SK-N-SH (cell line): ENCODE measurements at regions of chr2 and their contacts with region 1.

Region 1: DNA sequence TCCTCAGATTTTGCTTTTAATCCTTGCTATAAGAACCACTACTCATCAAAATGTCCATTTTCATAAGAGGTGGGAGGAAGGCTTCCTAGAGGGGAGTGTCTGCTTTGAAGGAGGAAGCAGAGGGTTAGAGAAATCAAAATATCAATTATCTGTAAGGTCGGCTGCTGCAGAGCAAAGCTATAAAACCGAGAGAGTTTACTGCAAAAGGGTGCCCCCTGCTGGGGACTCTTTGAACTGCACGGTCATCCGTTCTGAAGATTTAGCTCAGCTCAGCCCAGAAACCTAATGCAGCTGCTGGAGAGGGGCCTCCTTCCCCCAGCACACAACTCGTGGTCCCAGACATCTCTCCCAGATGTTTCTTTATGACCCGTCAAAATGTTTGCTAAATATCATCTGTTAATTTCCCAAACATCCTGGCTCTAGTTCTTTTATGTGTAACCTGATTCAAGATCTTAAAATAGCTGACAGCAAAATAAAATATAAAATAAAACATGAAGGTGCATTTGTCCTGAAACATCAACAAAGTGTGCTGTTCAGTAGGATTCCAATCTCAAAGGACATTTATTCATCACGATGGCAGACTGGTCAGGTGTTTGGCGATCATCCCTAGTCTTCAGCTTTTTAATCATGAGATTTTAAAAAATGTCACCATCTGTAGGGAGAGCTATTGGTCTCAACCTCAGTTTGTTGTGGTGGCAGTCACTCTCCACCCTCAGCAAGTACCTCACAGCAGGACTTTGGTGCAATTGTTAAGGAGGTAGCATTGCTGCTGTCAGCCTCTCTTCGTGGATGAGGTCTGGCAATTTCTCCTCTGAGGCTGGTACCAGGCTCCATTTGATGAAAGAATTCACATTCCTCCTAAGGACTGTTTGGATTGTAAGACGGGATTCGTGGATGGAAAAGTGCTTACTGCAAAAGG is 185.9 kb downstream of the MTX2 start:
- DNase-seq: peak; percentile 64
- H3K4me3 ChIP-seq: no peak overlapping the region; a peak in 1 of 4 replicates
- H3K27ac ChIP-seq: peak overlapping the region in 1 of 2 experiments; percentile 78; a peak in 2 of 4 replicates
- H3K4me1 ChIP-seq: peaks cover 0 to 16% of the 10 kb centered on the region in 2 experiments; a peak in 2 of 4 replicates
- H3K27me3 ChIP-seq: no peaks in the 10 kb centered on the region
- CTCF ChIP-seq: peak; percentile 94
- EP300 ChIP-seq: no peak
- RAD21 ChIP-seq: peak; percentile 88

Region 2: GRCh38 chr2:176118601-176119339 is 336.4 kb before region 1 on chr2:
- CTCF ChIA-PET with region 1: interaction called, 17 read pairs
- POLR2A ChIA-PET with region 1: interaction called, 3 read pairs
- DNase-seq: peak; percentile 66
- H3K4me3 ChIP-seq: no peak overlapping the region
- H3K27ac ChIP-seq: no peak overlapping the region
- H3K4me1 ChIP-seq: peaks cover 0 to 17% of the 10 kb centered on the region in 2 experiments; a peak in 1 of 4 replicates
- H3K27me3 ChIP-seq: peaks cover 40% of the 10 kb centered on the region
- CTCF ChIP-seq: peak; percentile 66
- EP300 ChIP-seq: no peak
- RAD21 ChIP-seq: peak; percentile 41

Region 3: GRCh38 chr2:176157499-176158185 is 297.5 kb before region 1 on chr2:
- CTCF ChIA-PET with region 1: interaction called, 14 read pairs
- POLR2A ChIA-PET with region 1: interaction called, 5 read pairs
- DNase-seq: peak; percentile 88
- H3K4me3 ChIP-seq: peak overlapping the region; percentile 54 to 71
- H3K27ac ChIP-seq: peak overlapping the region in 1 of 2 experiments; percentile 89; a peak in 2 of 4 replicates
- H3K4me1 ChIP-seq: peaks cover 0 to 8% of the 10 kb centered on the region in 2 experiments; a peak in 2 of 4 replicates
- H3K27me3 ChIP-seq: no peaks in the 10 kb centered on the region
- CTCF ChIP-seq: no peak
- EP300 ChIP-seq: no peak
- RAD21 ChIP-seq: no peak; the same call in 1 of the 2 replicates

Region 4: DNA sequence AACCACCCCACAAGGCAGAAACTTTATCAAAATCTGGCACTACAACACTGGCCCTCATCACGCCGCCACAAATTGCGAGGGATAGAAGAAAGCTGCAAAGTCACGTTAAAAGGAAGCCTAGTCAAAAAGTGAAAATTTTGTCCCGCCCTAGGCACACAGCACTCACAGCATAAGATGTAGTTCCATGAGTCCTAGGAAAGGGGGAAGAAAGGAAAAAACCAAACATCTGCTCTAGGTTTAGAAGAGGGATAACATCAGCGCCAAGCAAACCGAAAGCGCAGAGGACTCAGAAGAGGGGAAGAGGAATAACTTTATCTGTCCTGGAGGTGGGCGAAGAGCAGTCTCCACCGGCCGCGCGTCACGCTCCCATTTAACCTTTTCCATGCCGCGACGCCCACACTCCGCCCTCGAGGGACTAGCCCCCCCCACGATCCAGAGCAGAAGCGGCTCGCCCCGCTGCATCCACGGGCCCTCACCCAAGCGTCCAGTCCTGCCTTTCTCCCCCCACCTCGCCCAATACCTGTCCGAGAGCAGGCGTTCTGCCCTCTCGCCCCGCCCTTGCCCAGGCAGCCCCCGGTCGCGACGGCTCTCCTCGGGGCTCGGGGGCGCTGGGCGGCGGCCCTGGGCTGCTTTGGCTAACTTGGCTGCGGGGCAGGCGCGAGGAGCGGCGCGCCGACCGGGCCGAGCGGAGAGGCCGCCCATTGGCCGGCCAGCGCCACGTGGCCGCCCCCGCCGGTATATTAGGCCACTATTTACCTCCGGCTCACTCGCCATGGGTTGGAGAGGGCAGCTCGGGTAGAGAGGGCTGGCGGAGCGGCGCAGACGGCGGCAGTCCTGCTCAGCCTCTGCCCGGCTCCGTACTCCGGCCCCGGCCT is 267.0 kb before region 1 on chr2 and contains the start of gene HOXD1:
- CTCF ChIA-PET with region 1: interaction called, 13 read pairs
- POLR2A ChIA-PET with region 1: interaction called, 5 read pairs
- DNase-seq: peak; percentile 95
- H3K4me3 ChIP-seq: peak within 1 kb of the TSS; percentile 73 to 76
- H3K27ac ChIP-seq: peak within 1 kb of the TSS in 1 of 2 experiments; percentile 67; a peak in 1 of 4 replicates
- H3K4me1 ChIP-seq: peaks cover 0 to 10% of the 10 kb centered on the region in 2 experiments; a peak in 1 of 4 replicates
- H3K27me3 ChIP-seq: peaks cover 9% of the 10 kb centered on the region; the same call in 1 of the 2 replicates
- CTCF ChIP-seq: no peak
- EP300 ChIP-seq: no peak
- RAD21 ChIP-seq: no peak
- polyA plus RNA-seq, gene HOXD1: not detected in 2 replicates

Region 5: GRCh38 chr2:176574484-176575236 is 119.5 kb after region 1 on chr2:
- CTCF ChIA-PET with region 1: interaction called, 10 read pairs
- POLR2A ChIA-PET with region 1: interaction called, 4 read pairs
- DNase-seq: peak; percentile 59
- H3K4me3 ChIP-seq: no peak overlapping the region; a peak in 1 of 4 replicates
- H3K27ac ChIP-seq: peak overlapping the region; percentile 39 to 99; a peak in 3 of 4 replicates
- H3K4me1 ChIP-seq: peaks cover 7 to 45% of the 10 kb centered on the region in 2 experiments
- H3K27me3 ChIP-seq: no peaks in the 10 kb centered on the region
- CTCF ChIP-seq: no peak
- EP300 ChIP-seq: peak; percentile 83 to 100
- RAD21 ChIP-seq: peak; percentile 42